ENCODE measurements at regions of chr1 and their contacts with region 1.

Region 1: GRCh38 chr1:3453203-3453761 is 1.2 kb upstream of the ARHGEF16 start:
- DNase-seq: peak; percentile 64 to 96 (median 88)
- ATAC-seq: peak; percentile 76 to 93 (median 86)
- H3K4me3 ChIP-seq: peak overlapping the region in 1 of 4 donors; percentile 73
- H3K27ac ChIP-seq: peak overlapping the region in 2 of 4 donors; percentile 61 to 67
- H3K4me1 ChIP-seq: peaks cover 6 to 11% (median 8%) of the 10 kb centered on the region in 3 donors
- H3K27me3 ChIP-seq: no peaks in the 10 kb centered on the region
- CTCF ChIP-seq: peak; percentile 88 to 98 (median 96)

Region 2: GRCh38 chr1:3105167-3105863 is 348.0 kb before region 1 on chr1:
- intact Hi-C with region 1: no loop called
- DNase-seq: peak in 3 of 6 donors; percentile 35 to 60 (median 59)
- ATAC-seq: peak; percentile 33 to 79 (median 60)
- H3K4me3 ChIP-seq: no peak overlapping the region
- H3K27ac ChIP-seq: peak overlapping the region in 2 of 4 donors; percentile 18 to 22
- H3K4me1 ChIP-seq: peaks cover 0 to 3% (median 3%) of the 10 kb centered on the region in 3 donors
- H3K27me3 ChIP-seq: no peaks in the 10 kb centered on the region
- CTCF ChIP-seq: no peak

Region 3: DNA sequence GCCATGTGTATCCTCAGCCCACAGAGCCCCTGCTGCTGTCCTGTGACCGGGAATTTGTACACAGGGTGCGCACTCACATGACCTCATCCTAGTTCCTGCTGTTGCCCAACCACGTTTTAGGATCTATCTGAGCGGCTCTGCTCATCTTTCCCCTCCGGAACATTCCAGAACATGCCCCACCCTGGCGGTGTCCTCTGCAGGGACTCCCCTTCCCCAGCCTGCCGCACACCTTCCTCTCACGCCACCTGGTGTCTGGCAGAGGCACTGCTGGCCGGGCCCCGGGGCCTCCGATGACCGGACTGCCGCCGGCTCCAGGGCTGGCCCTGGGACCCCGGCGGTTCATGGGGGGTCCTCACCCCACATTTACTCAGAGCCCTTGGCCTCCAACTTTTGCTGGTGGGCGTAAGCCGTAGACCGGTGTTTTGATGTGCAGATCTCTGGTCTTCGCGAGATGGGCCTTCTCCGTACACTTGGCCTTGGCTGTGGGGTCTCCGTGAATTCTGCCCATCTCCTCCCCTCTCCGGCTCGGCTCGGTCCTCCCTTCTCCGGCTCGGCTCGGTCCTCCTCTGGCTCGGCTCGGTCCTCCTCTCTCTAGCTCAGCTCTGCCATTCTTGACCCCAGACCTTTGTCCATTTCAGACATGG is 30.6 kb after region 1 on chr1:
- intact Hi-C with region 1: loop called in 1 of 3 experiments (anchors 2 kb)
- DNase-seq: peak in 5 of 6 donors; percentile 35 to 90 (median 67)
- ATAC-seq: peak; percentile 75 to 92 (median 80)
- H3K4me3 ChIP-seq: no peak overlapping the region
- H3K27ac ChIP-seq: no peak overlapping the region
- H3K4me1 ChIP-seq: no peaks in the 10 kb centered on the region
- H3K27me3 ChIP-seq: no peaks in the 10 kb centered on the region
- CTCF ChIP-seq: peak; percentile 84 to 93 (median 92)

Region 4: DNA sequence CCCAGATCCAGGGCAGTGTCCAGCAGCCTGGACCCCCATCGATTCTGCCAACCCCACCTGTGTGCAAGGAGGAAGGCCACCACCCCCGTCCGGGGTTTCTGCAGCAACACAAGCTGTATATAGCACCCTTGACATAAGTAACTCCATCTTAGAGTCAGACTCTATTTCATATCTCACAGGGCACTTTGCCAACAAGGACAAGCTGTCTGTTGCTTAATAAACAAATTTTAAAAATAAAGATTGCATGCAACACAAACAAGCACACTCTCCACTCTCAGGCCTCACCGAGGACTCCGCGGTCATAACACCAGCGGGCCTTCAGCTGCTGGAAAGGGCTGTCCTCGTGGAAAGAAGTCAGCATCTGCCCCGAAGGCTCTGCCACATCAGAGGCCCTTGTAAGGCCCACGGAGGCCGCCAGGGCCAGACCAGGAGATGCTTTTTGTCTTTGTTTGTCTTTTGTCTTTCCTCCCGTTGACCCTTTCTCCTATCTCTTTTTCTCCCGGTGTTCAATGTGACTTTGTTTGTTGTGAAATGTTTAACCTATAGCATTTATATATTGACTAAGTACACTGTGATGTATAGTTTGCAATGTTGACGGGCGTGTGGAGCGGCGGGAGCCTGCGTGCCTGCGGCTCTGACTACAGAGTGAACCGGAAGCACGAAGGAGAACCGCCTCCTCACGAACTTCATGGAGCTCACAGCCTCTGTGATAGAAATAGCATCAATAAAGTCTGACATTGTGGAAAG is 133.8 kb after region 1 on chr1:
- intact Hi-C with region 1: no loop called
- DNase-seq: no peak
- ATAC-seq: no peak
- H3K4me3 ChIP-seq: no peak overlapping the region
- H3K27ac ChIP-seq: no peak overlapping the region
- H3K4me1 ChIP-seq: no peaks in the 10 kb centered on the region
- H3K27me3 ChIP-seq: no peaks in the 10 kb centered on the region
- CTCF ChIP-seq: no peak

Region 5: GRCh38 chr1:3624200-3625136 is 171.2 kb after region 1 on chr1 and contains the start of gene TPRG1L:
- intact Hi-C with region 1: loop called in 1 of 3 experiments (anchors 10 kb)
- DNase-seq: peak; percentile 98 to 100 (median 99)
- ATAC-seq: peak; percentile 96 to 99 (median 97)
- H3K4me3 ChIP-seq: peak within 1 kb of the TSS; percentile 66 to 99 (median 86)
- H3K27ac ChIP-seq: peak within 1 kb of the TSS in 3 of 4 donors; percentile 48 to 55 (median 52)
- H3K4me1 ChIP-seq: peaks cover 0 to 15% (median 13%) of the 10 kb centered on the region in 3 donors
- H3K27me3 ChIP-seq: no peaks in the 10 kb centered on the region
- CTCF ChIP-seq: no peak
- total RNA-seq, gene TPRG1L: 16.4 to 25.8 (median 21.8) TPM